ENCODE measurements at regions of chr10 and their contacts with region 1.

Region 1: GRCh38 chr10:34644224-34644623 is 170.9 kb downstream of the PARD3 start:
- DNase-seq: no peak
- CTCF ChIP-seq: no peak

Region 2: GRCh38 chr10:34462056-34462455 is 182.2 kb before region 1 on chr10:
- CTCF ChIA-PET with region 1: no interaction called
- POLR2A ChIA-PET with region 1: no interaction called
- DNase-seq: no peak
- CTCF ChIP-seq: no peak

Region 3: GRCh38 chr10:34655286-34656170 is 11.3 kb after region 1 on chr10:
- CTCF ChIA-PET with region 1: interaction called, 45 read pairs
- POLR2A ChIA-PET with region 1: no interaction called
- DNase-seq: peak; percentile 41
- CTCF ChIP-seq: peak; percentile 55

Measured in GM10248 (cell line).